ENCODE measurements at regions of chr9 and their contacts with region 1.

Region 1: GRCh38 chr9:134101623-134102149 is 33.9 kb upstream of the BRD3 start:
- DNase-seq: no peak
- H3K4me3 ChIP-seq: no peak overlapping the region
- H3K27ac ChIP-seq: no peak overlapping the region
- H3K4me1 ChIP-seq: no peaks in the 10 kb centered on the region
- H3K27me3 ChIP-seq: peaks cover 0 to 41% (median 0%) of the 10 kb centered on the region in 4 donors
- CTCF ChIP-seq: no peak
- POLR2A ChIP-seq: no peak

Region 2: GRCh38 chr9:133782157-133783130 is 319.2 kb before region 1 on chr9:
- intact Hi-C with region 1: loop called (anchors 10 kb)
- DNase-seq: no peak
- H3K4me3 ChIP-seq: no peak overlapping the region
- H3K27ac ChIP-seq: no peak overlapping the region
- H3K4me1 ChIP-seq: peaks cover 0 to 12% (median under 1%) of the 10 kb centered on the region in 3 donors
- H3K27me3 ChIP-seq: no peaks in the 10 kb centered on the region
- CTCF ChIP-seq: peak; percentile 64 to 82 (median 77)
- POLR2A ChIP-seq: no peak

Region 3: GRCh38 chr9:134276453-134277245 is 175.0 kb after region 1 on chr9:
- intact Hi-C with region 1: no loop called
- DNase-seq: no peak
- H3K4me3 ChIP-seq: no peak overlapping the region
- H3K27ac ChIP-seq: no peak overlapping the region
- H3K4me1 ChIP-seq: peaks cover 0 to 5% (median 0%) of the 10 kb centered on the region in 3 donors
- H3K27me3 ChIP-seq: peaks cover 0 to 77% (median 0%) of the 10 kb centered on the region in 4 donors
- CTCF ChIP-seq: no peak
- POLR2A ChIP-seq: no peak